CD14-positive monocyte (primary cell): ENCODE measurements at regions of chr14 and their contacts with region 1.

Region 1: DNA sequence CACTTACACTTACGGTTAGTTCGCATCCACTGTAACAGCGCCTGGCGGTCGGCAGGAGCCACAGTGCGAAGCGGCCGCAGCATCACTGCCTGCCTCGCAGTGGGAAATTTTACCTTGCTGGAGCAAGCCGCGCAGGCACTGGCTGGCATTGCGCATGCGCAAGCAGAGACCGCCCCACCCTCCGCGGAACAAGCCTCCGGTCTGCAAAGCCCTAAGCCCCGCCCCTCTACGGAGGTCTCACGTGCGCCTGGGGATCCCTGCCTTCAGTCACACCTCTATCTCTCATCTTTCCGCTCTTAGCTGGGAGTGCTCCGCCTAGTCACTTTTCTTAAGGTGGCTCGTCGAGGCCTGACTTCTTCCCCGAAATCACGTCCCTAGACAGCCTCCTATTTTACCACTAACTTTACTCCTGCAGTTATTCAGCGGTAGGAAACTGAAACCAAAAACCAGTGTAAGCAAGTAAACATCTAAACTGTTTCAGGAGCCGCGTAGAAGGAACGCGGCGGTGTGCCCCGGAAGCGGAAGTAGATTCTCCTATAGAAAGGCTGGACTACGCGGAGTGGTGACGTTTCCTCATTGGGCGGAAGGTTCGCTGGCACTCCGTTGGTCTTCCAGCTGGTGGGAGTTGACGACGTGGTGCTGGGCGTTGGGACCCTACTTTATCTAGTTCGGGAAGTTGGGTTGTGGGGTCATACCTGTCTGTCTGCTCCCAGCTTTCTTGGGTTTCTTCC is at the start of gene SRP54:
- DNase-seq: peak; percentile 99
- H3K4me3 ChIP-seq: peak within 1 kb of the TSS; percentile 61 to 90 (median 78)
- H3K4me3 Mint-ChIP-seq: no peak within 1 kb of the TSS
- H3K27ac ChIP-seq: peak within 1 kb of the TSS; percentile 95 to 96
- H3K27ac Mint-ChIP-seq: no peak within 1 kb of the TSS
- H3K4me1 ChIP-seq: peaks cover 29 to 39% of the 10 kb centered on the region in 2 donors
- H3K4me1 Mint-ChIP-seq: peaks cover 4% of the 10 kb centered on the region
- H3K27me3 ChIP-seq: no peaks in the 10 kb centered on the region
- H3K27me3 Mint-ChIP-seq: peaks cover 0 to 2% (median 0%) of the 10 kb centered on the region in 3 donors
- CTCF ChIP-seq: no peak
- polyA plus RNA-seq, gene SRP54: 24.9 to 33.6 (median 25.4) TPM

Region 2: GRCh38 chr14:34824826-34825225 is 157.8 kb before region 1 on chr14:
- intact Hi-C with region 1: loop called in 1 of 2 experiments (anchors 5 kb)
- DNase-seq: no peak
- H3K4me3 ChIP-seq: no peak overlapping the region
- H3K4me3 Mint-ChIP-seq: no peak overlapping the region
- H3K27ac ChIP-seq: peak overlapping the region in 1 of 2 donors; percentile 47
- H3K27ac Mint-ChIP-seq: peak overlapping the region in 3 of 7 donors; percentile 9 to 73 (median 23)
- H3K4me1 ChIP-seq: no peaks in the 10 kb centered on the region
- H3K4me1 Mint-ChIP-seq: peaks cover 7% of the 10 kb centered on the region
- H3K27me3 ChIP-seq: no peaks in the 10 kb centered on the region
- H3K27me3 Mint-ChIP-seq: no peaks in the 10 kb centered on the region
- CTCF ChIP-seq: no peak

Region 3: DNA sequence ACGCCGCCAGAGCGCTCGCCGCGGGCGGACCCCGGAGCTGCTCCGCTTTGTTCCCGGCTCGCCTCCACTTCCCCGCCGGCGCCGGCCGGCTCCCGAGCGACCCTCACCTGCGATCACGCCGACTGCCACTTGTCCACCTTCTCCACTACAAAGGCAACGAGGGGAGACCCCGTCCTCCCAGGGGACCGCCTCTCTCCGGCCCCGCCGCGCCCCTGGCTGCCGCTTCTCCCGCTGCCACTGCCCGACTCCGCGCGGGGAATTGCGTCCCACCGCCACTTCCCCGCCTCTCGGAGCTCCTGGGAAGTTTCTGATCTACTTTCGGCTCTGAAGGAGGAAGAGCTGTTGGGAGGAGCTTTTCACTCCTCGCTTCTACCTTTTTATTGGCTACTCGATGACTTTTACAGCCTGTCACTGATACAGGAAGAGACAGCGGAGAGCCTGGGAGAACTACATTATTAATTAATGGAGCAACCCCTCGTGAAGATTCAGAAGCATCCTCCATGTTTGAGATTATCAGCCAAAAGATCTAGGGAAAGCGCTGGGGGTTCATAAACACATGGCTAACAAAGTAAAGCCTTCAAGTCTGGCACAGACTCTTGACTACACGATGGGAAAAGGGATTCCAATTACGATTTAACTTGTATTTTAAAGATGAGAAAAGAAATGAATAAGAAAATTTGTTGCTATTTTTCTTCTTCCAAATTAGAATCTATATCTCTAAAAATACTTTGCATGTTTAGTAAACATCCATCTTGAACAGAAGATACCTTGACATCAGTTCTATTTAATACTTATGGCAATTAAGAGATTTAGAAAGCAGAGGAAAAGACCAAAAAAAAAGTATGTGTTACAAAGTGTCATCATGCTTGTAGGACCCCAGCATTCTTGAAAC is 107.3 kb before region 1 on chr14 and contains the start of gene BAZ1A:
- intact Hi-C with region 1: loop called (anchors 5 kb)
- DNase-seq: peak; percentile 66 to 86 (median 85)
- H3K4me3 ChIP-seq: peak within 1 kb of the TSS; percentile 71 to 99 (median 82)
- H3K4me3 Mint-ChIP-seq: peak within 1 kb of the TSS; percentile 100
- H3K27ac ChIP-seq: peak within 1 kb of the TSS; percentile 94 to 99
- H3K27ac Mint-ChIP-seq: peak within 1 kb of the TSS; percentile 99 to 100 (median 99)
- H3K4me1 ChIP-seq: peaks cover 14 to 18% of the 10 kb centered on the region in 2 donors
- H3K4me1 Mint-ChIP-seq: peaks cover 29% of the 10 kb centered on the region
- H3K27me3 ChIP-seq: no peaks in the 10 kb centered on the region
- H3K27me3 Mint-ChIP-seq: no peaks in the 10 kb centered on the region
- CTCF ChIP-seq: no peak
- polyA plus RNA-seq, gene BAZ1A: 7.3 to 25.5 (median 12.7) TPM

Region 4: GRCh38 chr14:35046048-35046741 is 63.6 kb after region 1 on chr14 and contains the start of gene FAM177A1:
- intact Hi-C with region 1: loop called (anchors 2 to 10 kb)
- DNase-seq: peak; percentile 98 to 99 (median 98)
- H3K4me3 ChIP-seq: peak within 1 kb of the TSS; percentile 72 to 94 (median 86)
- H3K4me3 Mint-ChIP-seq: peak within 1 kb of the TSS; percentile 96 to 98
- H3K27ac ChIP-seq: peak within 1 kb of the TSS; percentile 89 to 95
- H3K27ac Mint-ChIP-seq: peak within 1 kb of the TSS; percentile 98 to 100 (median 99)
- H3K4me1 ChIP-seq: peaks cover 15 to 24% of the 10 kb centered on the region in 2 donors
- H3K4me1 Mint-ChIP-seq: peaks cover 26% of the 10 kb centered on the region
- H3K27me3 ChIP-seq: no peaks in the 10 kb centered on the region
- H3K27me3 Mint-ChIP-seq: peaks cover 0 to 3% (median 0%) of the 10 kb centered on the region in 3 donors
- CTCF ChIP-seq: no peak
- polyA plus RNA-seq, gene FAM177A1: 12.5 to 48.1 (median 29.4) TPM

Region 5: DNA sequence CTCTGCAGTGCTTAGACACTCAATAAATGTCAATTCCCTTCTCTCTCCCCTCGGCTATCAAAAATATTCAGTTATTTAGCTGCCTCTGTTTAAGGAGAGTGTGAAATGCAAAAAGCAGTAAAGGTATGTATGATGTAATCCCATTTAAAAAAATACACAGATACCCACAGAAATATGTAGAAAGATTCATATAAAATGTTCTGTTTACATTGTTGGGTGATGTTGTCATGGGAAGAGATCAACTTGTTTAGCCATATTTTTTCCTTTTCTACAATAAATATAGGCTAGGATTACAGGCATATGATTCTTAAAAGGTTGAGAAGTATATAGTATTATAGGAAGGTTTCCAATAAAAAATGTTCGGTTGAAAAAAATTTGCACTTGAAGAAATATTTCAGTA is 131.5 kb after region 1 on chr14:
- intact Hi-C with region 1: loop called in 1 of 2 experiments (anchors 10 kb)
- DNase-seq: no peak
- H3K4me3 ChIP-seq: no peak overlapping the region
- H3K4me3 Mint-ChIP-seq: no peak overlapping the region
- H3K27ac ChIP-seq: no peak overlapping the region
- H3K27ac Mint-ChIP-seq: no peak overlapping the region
- H3K4me1 ChIP-seq: peaks cover 0 to 2% of the 10 kb centered on the region in 2 donors
- H3K4me1 Mint-ChIP-seq: peaks cover 19% of the 10 kb centered on the region
- H3K27me3 ChIP-seq: no peaks in the 10 kb centered on the region
- H3K27me3 Mint-ChIP-seq: no peaks in the 10 kb centered on the region
- CTCF ChIP-seq: no peak

Region 6: DNA sequence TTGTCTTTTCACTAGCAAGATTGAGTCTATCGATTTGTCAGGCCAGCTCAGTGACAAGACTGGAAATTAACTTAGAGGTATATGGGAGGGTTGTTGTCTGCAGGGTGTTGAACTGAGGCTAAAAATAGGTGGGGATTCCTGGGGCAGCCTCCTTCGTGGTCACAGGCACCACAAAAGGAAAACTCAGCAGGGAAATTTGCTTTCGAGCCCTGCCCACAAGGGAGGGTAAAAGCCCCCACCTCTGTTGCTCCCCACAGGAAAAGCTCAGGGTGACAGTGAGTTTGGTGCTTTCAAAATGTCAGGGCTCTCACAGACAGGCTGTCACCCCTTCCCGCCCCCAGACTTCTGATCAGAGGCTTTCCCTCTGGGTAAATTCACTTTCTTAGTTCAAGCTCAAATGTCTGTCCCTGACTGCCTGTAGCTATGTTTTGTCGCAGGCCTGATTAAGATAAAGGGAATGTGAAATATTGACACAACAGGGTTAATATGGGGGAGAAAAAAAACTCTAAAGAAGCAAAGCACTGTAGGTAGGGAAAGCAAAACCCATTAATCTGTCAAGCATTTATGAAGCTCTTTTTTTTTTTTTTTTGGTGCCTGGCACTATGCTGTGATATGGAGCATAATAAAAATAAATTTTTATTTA is 433.6 kb after region 1 on chr14:
- intact Hi-C with region 1: loop called in 1 of 2 experiments (anchors 10 kb)
- DNase-seq: no peak
- H3K4me3 ChIP-seq: no peak overlapping the region
- H3K4me3 Mint-ChIP-seq: no peak overlapping the region
- H3K27ac ChIP-seq: no peak overlapping the region
- H3K27ac Mint-ChIP-seq: no peak overlapping the region
- H3K4me1 ChIP-seq: no peaks in the 10 kb centered on the region
- H3K4me1 Mint-ChIP-seq: peaks cover 10% of the 10 kb centered on the region
- H3K27me3 ChIP-seq: no peaks in the 10 kb centered on the region
- H3K27me3 Mint-ChIP-seq: peaks cover 0 to 5% (median 4%) of the 10 kb centered on the region in 3 donors
- CTCF ChIP-seq: no peak